Cardiac septum (tissue), 1 donor: ENCODE measurements at regions of chr19 and their contacts with region 1.

Region 1: GRCh38 chr19:18058208-18059030 is 28.3 kb downstream of the IL12RB1 start:
- DNase-seq: peak; percentile 92

Region 2: DNA sequence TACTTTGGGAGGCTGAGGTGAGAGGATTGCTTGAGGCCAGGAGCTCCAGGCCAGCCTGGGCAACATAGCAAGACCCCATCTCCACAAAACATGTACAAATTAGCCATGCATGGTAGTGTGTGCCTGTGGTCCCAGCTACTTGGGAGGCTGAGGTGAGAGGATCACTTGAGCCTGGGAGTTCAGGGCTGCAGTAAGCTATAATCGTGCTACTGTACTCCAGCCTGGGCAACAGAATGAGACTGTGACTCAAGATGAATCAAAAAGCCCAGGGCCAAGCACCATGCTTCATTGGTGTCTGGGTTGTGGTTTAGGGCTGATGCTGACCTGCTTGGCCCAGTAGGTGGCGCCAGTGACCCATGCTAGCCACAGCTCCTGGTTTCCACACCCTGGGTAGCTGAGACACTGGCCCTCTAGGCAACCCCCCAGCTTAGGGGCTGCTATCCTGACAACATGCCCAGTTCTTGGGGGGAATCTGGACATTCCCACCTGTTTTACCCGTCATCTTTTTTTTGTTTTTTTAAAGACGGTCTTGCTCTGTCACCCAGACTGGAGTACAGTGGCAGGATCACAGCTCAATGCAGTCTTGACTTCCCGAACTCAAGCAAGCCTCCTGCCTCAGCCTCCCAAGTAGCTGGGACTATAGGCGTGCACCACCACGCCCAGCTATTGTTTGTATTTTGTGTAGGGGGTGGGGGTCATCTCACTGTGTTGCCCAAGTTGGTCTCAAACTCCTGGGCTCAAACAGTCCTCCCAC is 120.2 kb before region 1 on chr19:
- intact Hi-C with region 1: loop called (anchors 5 kb)
- DNase-seq: peak; percentile 92

Region 3: GRCh38 chr19:18007044-18007916 is 51.1 kb before region 1 on chr19:
- intact Hi-C with region 1: loop called (anchors 1 kb)
- DNase-seq: peak; percentile 94